B cell (primary cell): ENCODE measurements at regions of chr5 and their contacts with region 1.

Region 1: DNA sequence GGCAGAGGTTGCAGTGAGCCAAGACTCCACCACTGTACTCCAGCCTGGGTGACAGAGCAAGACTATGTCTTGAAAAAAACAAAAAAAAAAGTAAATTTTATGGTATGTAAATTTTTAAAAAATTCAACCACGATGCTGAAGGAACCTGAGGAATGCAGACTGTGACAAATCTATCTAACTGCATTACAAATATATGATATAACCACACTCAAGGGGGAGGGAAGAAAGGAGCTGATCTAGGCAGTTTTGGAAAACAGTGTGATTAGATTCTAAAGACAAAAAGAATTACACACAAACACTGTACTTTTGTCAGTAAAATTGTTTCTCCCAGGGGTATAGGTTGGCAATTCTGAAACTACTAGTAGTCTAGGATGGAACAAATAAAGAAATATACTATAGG is 17.0 kb downstream of the LARS1 start:
- DNase-seq: no peak
- ATAC-seq: no peak
- H3K4me3 ChIP-seq: no peak overlapping the region
- H3K4me3 Mint-ChIP-seq: no peak overlapping the region
- H3K27ac ChIP-seq: no peak overlapping the region
- H3K27ac Mint-ChIP-seq: no peak overlapping the region
- H3K4me1 ChIP-seq: no peaks in the 10 kb centered on the region
- H3K4me1 Mint-ChIP-seq: no peaks in the 10 kb centered on the region
- H3K27me3 ChIP-seq: no peaks in the 10 kb centered on the region
- H3K27me3 Mint-ChIP-seq: no peaks in the 10 kb centered on the region
- CTCF ChIP-seq: no peak

Region 2: GRCh38 chr5:145365464-145365863 is 800.0 kb before region 1 on chr5:
- CTCF ChIA-PET with region 1: no interaction called
- POLR2A ChIA-PET with region 1: no interaction called
- intact Hi-C with region 1: no loop called
- DNase-seq: no peak
- ATAC-seq: no peak
- H3K4me3 ChIP-seq: no peak overlapping the region
- H3K4me3 Mint-ChIP-seq: no peak overlapping the region
- H3K27ac ChIP-seq: no peak overlapping the region
- H3K27ac Mint-ChIP-seq: no peak overlapping the region
- H3K4me1 ChIP-seq: no peaks in the 10 kb centered on the region
- H3K4me1 Mint-ChIP-seq: no peaks in the 10 kb centered on the region
- H3K27me3 ChIP-seq: no peaks in the 10 kb centered on the region
- H3K27me3 Mint-ChIP-seq: no peaks in the 10 kb centered on the region
- CTCF ChIP-seq: no peak

Region 3: DNA sequence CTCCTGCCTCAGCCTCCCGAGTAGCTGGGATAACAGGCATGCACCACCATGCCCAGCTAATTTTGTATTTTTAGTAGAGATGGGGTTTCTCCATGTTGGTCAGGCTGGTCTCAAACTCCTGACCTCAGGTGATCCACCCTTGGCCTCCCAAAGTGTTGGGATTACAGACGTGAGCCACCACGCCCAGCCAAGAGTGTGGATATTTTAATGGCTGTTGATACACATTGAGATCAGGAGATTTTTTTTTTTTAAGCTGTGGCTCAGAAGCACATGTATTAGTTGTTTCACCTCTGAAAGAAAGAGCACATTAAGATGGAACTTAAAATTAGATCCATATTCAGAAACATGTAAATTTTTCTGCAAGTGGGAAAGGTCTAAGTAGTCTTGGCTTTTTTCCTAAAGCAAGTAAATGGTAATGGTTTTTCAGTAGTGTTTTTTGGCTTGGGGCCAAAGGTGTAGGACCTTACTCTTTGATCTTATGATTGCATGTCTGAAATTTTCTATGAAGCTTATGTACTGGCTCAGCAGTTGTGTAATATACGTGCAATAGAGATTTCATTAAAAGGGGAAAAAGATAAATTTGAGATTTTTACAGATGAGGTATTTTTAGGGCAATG is 47.9 kb after region 1 on chr5:
- CTCF ChIA-PET with region 1: no interaction called
- POLR2A ChIA-PET with region 1: no interaction called
- intact Hi-C with region 1: loop called (anchors 10 kb)
- DNase-seq: no peak
- ATAC-seq: no peak
- H3K4me3 ChIP-seq: no peak overlapping the region
- H3K4me3 Mint-ChIP-seq: no peak overlapping the region
- H3K27ac ChIP-seq: no peak overlapping the region
- H3K27ac Mint-ChIP-seq: no peak overlapping the region
- H3K4me1 ChIP-seq: peaks cover 9 to 35% of the 10 kb centered on the region in 2 donors
- H3K4me1 Mint-ChIP-seq: peaks cover 57% of the 10 kb centered on the region
- H3K27me3 ChIP-seq: no peaks in the 10 kb centered on the region
- H3K27me3 Mint-ChIP-seq: no peaks in the 10 kb centered on the region
- CTCF ChIP-seq: no peak

Region 4: DNA sequence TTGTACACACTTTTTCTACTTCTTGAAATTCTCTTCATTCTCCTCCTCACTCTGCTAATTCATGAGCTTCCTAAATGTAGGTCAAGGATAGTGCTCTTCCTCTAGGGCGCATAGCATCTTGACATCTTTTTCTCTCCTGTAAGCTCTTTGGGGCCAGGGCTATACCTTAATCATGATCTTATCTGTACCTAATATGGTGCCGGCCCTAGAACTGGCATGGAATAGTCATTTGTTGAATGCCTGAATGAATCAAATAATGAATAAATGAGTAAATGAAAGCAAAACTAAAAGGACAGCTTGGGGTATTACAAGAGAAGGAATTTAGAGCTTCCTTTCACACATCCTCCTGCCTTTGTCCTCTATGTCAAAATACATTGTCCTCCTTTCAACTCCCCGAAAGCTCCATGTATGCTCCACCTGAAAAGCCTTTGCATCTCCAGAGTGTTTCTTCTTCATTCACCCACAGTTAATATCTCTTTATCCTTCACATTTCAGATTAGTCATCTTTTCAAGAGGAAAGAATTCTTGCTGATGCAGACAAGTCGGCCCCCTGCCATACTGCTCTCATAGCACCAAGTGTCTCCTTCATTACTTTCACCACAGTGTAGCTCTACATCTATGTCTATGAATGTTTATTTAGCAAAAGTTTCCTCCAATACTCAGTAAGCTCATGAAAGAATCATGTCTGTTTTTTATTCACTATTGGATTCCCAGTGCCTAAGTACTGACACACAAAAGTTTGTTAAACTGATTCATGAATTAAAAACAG is 729.5 kb after region 1 on chr5:
- CTCF ChIA-PET with region 1: no interaction called
- POLR2A ChIA-PET with region 1: no interaction called
- intact Hi-C with region 1: no loop called
- DNase-seq: no peak
- ATAC-seq: no peak
- H3K4me3 ChIP-seq: no peak overlapping the region
- H3K4me3 Mint-ChIP-seq: no peak overlapping the region
- H3K27ac ChIP-seq: no peak overlapping the region
- H3K27ac Mint-ChIP-seq: no peak overlapping the region
- H3K4me1 ChIP-seq: no peaks in the 10 kb centered on the region
- H3K4me1 Mint-ChIP-seq: no peaks in the 10 kb centered on the region
- H3K27me3 ChIP-seq: no peaks in the 10 kb centered on the region
- H3K27me3 Mint-ChIP-seq: no peaks in the 10 kb centered on the region
- CTCF ChIP-seq: no peak